ENCODE measurements at regions of chr4 and their contacts with region 1.

Region 1: GRCh38 chr4:124111922-124112321 is 600.6 kb downstream of the ANKRD50 start:
- DNase-seq: peak; percentile 69
- H3K4me3 Mint-ChIP-seq: no peak overlapping the region
- H3K27ac Mint-ChIP-seq: no peak overlapping the region
- H3K4me1 Mint-ChIP-seq: no peaks in the 10 kb centered on the region
- H3K27me3 Mint-ChIP-seq: no peaks in the 10 kb centered on the region
- CTCF ChIP-seq: peak; percentile 75

Region 2: DNA sequence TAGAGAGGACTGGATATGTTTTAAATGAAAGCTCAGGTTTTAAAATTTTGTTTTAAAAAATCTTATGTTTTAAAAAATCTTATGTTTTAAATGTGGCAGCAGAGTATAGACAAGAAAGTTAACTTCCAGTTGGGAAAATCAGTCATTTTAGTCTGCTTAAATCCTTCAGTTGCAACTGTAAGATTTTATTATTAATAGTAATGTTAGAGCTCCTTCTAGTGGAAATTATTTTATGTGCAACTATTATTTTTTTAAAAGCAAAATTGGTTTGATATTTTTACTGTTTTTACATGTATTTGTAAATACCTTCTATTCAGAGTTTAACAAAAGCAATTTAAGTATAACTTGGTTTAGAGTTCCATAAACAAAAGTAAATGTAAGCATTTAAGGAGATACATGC is 1181.1 kb before region 1 on chr4:
- CTCF ChIA-PET with region 1: no interaction called
- POLR2A ChIA-PET with region 1: no interaction called
- intact Hi-C with region 1: loop called (anchors 5 kb)
- DNase-seq: peak; percentile 13
- H3K4me3 Mint-ChIP-seq: no peak overlapping the region
- H3K27ac Mint-ChIP-seq: no peak overlapping the region
- H3K4me1 Mint-ChIP-seq: no peaks in the 10 kb centered on the region
- H3K27me3 Mint-ChIP-seq: no peaks in the 10 kb centered on the region
- CTCF ChIP-seq: peak; percentile 51

Region 3: GRCh38 chr4:123127218-123127617 is 984.7 kb before region 1 on chr4:
- CTCF ChIA-PET with region 1: interaction called, 5 read pairs
- POLR2A ChIA-PET with region 1: no interaction called
- intact Hi-C with region 1: loop called (anchors 2 kb)
- DNase-seq: peak; percentile 16
- H3K4me3 Mint-ChIP-seq: no peak overlapping the region
- H3K27ac Mint-ChIP-seq: no peak overlapping the region
- H3K4me1 Mint-ChIP-seq: no peaks in the 10 kb centered on the region
- H3K27me3 Mint-ChIP-seq: no peaks in the 10 kb centered on the region
- CTCF ChIP-seq: peak; percentile 42

Region 4: DNA sequence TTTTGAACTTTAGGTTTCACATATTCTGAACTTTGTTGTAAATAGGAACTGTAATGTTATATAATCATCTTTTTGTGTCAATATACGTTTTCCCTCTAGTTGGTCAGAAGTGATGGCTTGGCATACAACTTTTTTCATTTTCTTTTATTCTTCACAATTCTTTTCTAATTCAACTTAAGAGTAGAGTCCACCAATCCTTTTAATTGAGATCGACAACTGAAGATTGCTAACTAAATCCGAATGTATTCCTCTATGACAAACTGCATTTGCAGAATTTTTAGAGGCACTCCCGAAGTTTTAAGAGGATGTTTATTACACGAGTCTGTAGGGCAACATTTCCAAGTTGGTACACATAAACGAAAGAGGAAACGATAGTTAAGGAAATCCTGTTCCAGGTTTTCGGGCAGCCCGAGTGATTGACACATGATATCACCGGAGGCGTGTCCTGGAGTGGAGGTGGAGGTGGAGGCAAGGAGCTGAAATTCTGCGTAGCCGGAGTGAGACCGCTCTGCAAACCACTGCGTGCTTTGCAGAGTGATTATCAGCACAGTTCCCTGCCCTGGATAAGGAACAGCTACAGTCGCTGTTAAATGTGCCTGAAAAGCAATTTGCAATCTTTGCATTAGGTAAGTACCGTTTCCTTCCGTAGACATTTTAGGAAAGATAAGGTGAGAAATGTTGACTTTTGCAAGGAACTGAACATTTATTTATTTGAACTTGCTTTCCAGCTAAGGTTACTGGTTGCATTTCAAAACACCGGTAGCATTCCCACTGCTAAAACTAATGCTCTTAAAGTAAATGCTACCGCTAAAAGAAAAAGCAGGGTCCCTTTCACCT is 715.4 kb before region 1 on chr4 and contains the start of gene SPRY1:
- CTCF ChIA-PET with region 1: no interaction called
- POLR2A ChIA-PET with region 1: no interaction called
- intact Hi-C with region 1: loop called (anchors 5 kb)
- DNase-seq: peak; percentile 95
- H3K4me3 Mint-ChIP-seq: peak within 1 kb of the TSS; percentile 89
- H3K27ac Mint-ChIP-seq: peak within 1 kb of the TSS; percentile 71
- H3K4me1 Mint-ChIP-seq: peaks cover 10% of the 10 kb centered on the region
- H3K27me3 Mint-ChIP-seq: no peaks in the 10 kb centered on the region
- CTCF ChIP-seq: no peak
- total RNA-seq, gene SPRY1: 4.3 and 5.6 TPM in 2 replicates

Region 5: DNA sequence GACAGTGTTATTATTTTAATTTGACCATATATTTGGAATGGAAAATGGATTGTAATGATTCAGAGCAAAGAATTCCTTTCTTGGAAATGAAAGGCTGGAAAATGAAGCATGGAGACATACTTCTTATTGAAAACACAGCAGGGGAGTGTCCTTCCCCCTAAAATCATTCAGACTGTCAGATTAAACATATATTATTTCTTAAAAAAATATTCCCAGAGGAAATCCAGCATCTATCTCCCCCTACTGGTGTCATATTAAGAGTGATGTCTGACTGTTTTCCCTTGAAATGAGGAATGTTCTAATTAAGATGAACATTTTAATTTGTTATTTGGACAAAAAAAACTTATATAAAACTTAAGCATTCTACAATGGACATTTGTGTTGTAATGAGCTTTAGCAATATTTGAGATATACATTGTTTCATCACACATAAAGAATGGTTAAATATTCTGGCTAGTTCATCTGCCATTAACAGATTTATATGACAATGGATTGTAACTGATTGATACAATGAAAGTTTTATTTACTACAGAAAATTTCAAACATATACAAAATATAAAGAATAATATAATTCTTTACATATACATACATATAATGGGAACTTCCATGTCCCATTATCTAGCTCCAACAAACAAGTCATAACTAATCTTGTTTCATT is 450.7 kb before region 1 on chr4:
- CTCF ChIA-PET with region 1: interaction called, 4 read pairs
- POLR2A ChIA-PET with region 1: no interaction called
- intact Hi-C with region 1: loop called (anchors 2 kb)
- DNase-seq: peak; percentile 39
- H3K4me3 Mint-ChIP-seq: no peak overlapping the region
- H3K27ac Mint-ChIP-seq: no peak overlapping the region
- H3K4me1 Mint-ChIP-seq: no peaks in the 10 kb centered on the region
- H3K27me3 Mint-ChIP-seq: no peaks in the 10 kb centered on the region
- CTCF ChIP-seq: peak; percentile 46

Region 6: GRCh38 chr4:123776254-123776653 is 335.7 kb before region 1 on chr4:
- CTCF ChIA-PET with region 1: interaction called, 72 read pairs
- POLR2A ChIA-PET with region 1: no interaction called
- intact Hi-C with region 1: loop called (anchors 1 kb)
- DNase-seq: no peak
- H3K4me3 Mint-ChIP-seq: no peak overlapping the region
- H3K27ac Mint-ChIP-seq: no peak overlapping the region
- H3K4me1 Mint-ChIP-seq: peaks cover 6% of the 10 kb centered on the region
- H3K27me3 Mint-ChIP-seq: no peaks in the 10 kb centered on the region
- CTCF ChIP-seq: no peak

Region 7: GRCh38 chr4:123893011-123893981 is 218.6 kb before region 1 on chr4:
- CTCF ChIA-PET with region 1: no interaction called
- POLR2A ChIA-PET with region 1: no interaction called
- intact Hi-C with region 1: no loop called
- DNase-seq: no peak
- H3K4me3 Mint-ChIP-seq: no peak overlapping the region
- H3K27ac Mint-ChIP-seq: no peak overlapping the region
- H3K4me1 Mint-ChIP-seq: peaks cover 10% of the 10 kb centered on the region
- H3K27me3 Mint-ChIP-seq: no peaks in the 10 kb centered on the region
- CTCF ChIP-seq: no peak

Region 8: DNA sequence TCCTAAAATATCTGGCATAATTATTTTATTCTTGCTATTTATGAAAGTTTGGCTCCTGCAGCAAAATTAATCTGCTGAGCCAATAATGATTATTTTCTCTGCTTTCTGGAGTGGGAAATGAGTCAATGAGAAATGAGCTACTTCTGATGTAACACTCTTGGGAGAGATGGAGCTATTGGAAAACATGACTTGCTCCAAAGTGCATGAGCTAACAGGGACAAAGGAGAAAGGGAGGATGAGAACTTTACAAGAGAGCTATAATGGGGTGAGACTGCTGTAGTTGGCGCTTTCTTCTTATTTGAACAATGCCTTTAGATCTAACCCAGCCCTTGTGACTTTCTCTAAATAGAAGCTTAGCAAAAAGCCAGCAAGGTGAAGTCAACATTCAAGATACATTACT is 14.5 kb before region 1 on chr4:
- CTCF ChIA-PET with region 1: no interaction called
- POLR2A ChIA-PET with region 1: no interaction called
- intact Hi-C with region 1: no loop called
- DNase-seq: no peak
- H3K4me3 Mint-ChIP-seq: no peak overlapping the region
- H3K27ac Mint-ChIP-seq: no peak overlapping the region
- H3K4me1 Mint-ChIP-seq: no peaks in the 10 kb centered on the region
- H3K27me3 Mint-ChIP-seq: no peaks in the 10 kb centered on the region
- CTCF ChIP-seq: no peak

Region 9: DNA sequence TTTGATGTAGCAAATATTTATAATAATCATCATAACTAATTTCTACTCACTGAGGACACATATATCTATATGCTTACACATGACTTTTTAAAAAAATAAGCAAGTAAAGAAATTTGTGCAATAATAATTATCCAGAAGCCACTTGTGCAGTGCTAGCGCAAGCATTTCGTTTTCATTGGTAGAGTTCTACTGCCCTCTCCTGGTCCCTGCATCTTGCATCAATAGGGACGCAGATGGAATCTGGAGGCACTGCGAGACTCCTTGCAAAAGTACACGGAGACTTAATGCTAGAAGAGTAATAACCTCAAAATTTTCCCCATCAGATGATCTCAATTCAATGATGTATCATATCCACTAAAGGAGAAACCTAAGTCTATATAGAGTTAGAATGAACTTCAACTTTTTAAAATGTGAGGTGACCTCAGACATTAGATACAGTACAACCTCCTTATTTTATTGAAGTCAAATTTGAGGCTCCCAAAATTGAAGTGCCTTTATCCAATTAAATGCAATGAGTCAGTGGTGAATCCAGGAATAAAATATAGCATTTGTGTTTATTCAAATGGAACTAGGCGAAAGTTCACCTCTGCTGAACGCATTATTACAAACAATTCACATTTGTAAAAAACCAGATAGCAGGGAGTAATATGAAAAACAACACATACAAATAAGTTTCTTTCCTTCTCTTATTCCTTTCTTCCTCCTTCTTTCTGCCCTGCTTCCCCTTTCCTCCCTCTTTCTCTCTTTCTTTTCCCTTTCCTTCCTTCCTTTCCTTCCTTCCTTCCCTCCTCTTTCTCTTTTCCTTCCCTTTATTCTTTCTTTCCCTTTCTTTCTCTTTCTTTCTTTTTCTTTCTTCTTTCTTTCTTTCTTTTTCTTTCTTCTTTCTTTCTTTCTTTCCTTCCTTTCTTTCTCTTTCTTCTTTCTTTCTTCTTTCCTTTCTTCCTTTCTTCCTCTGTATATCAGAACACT is 150.6 kb after region 1 on chr4:
- CTCF ChIA-PET with region 1: interaction called, 3 read pairs
- POLR2A ChIA-PET with region 1: no interaction called
- intact Hi-C with region 1: loop called (anchors 1 kb)
- DNase-seq: peak; percentile 87
- H3K4me3 Mint-ChIP-seq: no peak overlapping the region
- H3K27ac Mint-ChIP-seq: no peak overlapping the region
- H3K4me1 Mint-ChIP-seq: peaks cover 5% of the 10 kb centered on the region
- H3K27me3 Mint-ChIP-seq: no peaks in the 10 kb centered on the region
- CTCF ChIP-seq: peak; percentile 77

Measured in MCF 10A (cell line).